SK-N-SH (cell line): ENCODE measurements at regions of chr19 and their contacts with region 1.

Region 1: GRCh38 chr19:4567584-4568071 is 8.1 kb upstream of the SEMA6B start:
- DNase-seq: peak; percentile 88
- H3K4me3 ChIP-seq: peak overlapping the region in 1 of 2 experiments; percentile 27; a peak in 1 of 4 replicates
- H3K27ac ChIP-seq: no peak overlapping the region
- H3K4me1 ChIP-seq: no peaks in the 10 kb centered on the region; a peak in 1 of 4 replicates
- H3K27me3 ChIP-seq: no peaks in the 10 kb centered on the region
- CTCF ChIP-seq: peak; percentile 88
- EP300 ChIP-seq: no peak
- RAD21 ChIP-seq: peak; percentile 51

Region 2: GRCh38 chr19:4583961-4584669 is 16.5 kb after region 1 on chr19:
- CTCF ChIA-PET with region 1: interaction called, 20 read pairs
- POLR2A ChIA-PET with region 1: no interaction called
- DNase-seq: peak; percentile 87
- H3K4me3 ChIP-seq: peak overlapping the region; percentile 50 to 60
- H3K27ac ChIP-seq: no peak overlapping the region
- H3K4me1 ChIP-seq: peaks cover 0 to 8% of the 10 kb centered on the region in 2 experiments; a peak in 1 of 4 replicates
- H3K27me3 ChIP-seq: peaks cover 22% of the 10 kb centered on the region; the same call in 1 of the 2 replicates
- CTCF ChIP-seq: no peak
- EP300 ChIP-seq: no peak
- RAD21 ChIP-seq: no peak

Region 3: DNA sequence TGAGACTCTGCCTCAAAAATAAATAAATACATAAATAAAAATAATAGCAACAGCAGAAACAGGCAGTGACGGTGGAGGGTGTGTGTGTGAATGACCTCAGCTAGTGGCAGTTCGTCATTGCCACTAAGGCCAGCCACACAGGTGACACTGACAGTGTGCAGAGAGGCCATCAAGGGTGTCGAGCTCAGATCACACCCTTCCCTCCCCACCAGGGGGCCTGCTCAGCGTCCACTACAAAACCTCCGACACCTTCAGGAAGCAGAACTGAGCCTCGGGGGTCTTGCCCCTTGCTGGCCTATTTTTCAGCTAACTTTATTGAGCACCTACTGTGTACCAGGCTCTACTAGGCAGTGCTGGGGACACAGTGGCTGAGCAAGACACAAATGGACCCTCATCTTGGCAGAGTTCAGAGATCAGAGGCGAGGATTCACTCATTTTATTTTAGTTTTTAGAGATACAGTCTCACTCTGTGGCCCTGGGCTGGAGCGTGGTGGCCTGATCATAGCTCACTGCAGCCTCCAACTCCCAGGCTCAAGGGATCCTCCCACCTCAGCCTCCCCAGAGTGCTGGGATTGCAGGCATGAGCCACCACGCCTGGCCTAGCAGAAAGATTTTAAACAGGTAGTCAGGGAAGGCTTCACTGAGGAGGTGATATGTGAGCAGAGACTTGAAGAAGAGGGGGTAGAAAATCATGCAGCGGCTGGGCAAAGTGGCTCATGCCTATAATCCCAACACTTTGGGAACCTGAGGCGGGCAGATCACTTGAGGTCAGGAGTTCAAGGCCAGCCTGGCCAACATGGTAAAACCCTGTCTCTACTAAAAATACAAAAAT is 22.2 kb after region 1 on chr19:
- CTCF ChIA-PET with region 1: interaction called, 20 read pairs
- POLR2A ChIA-PET with region 1: no interaction called
- DNase-seq: peak; percentile 74
- H3K4me3 ChIP-seq: no peak overlapping the region
- H3K27ac ChIP-seq: no peak overlapping the region
- H3K4me1 ChIP-seq: peaks cover 0 to 2% of the 10 kb centered on the region in 2 experiments; a peak in 1 of 4 replicates
- H3K27me3 ChIP-seq: peaks cover 23% of the 10 kb centered on the region; the same call in 1 of the 2 replicates
- CTCF ChIP-seq: peak; percentile 50
- EP300 ChIP-seq: no peak
- RAD21 ChIP-seq: peak; percentile 43

Region 4: GRCh38 chr19:4606921-4607678 is 39.5 kb after region 1 on chr19:
- CTCF ChIA-PET with region 1: interaction called, 20 read pairs
- POLR2A ChIA-PET with region 1: no interaction called
- DNase-seq: peak; percentile 89
- H3K4me3 ChIP-seq: no peak overlapping the region; a peak in 1 of 4 replicates
- H3K27ac ChIP-seq: no peak overlapping the region
- H3K4me1 ChIP-seq: peaks cover 0 to 2% of the 10 kb centered on the region in 2 experiments; a peak in 1 of 4 replicates
- H3K27me3 ChIP-seq: peaks cover 27% of the 10 kb centered on the region; the same call in 1 of the 2 replicates
- CTCF ChIP-seq: no peak
- EP300 ChIP-seq: peak in 1 of 2 experiments; percentile 48; a peak in 1 of 4 replicates
- RAD21 ChIP-seq: no peak

Region 5: DNA sequence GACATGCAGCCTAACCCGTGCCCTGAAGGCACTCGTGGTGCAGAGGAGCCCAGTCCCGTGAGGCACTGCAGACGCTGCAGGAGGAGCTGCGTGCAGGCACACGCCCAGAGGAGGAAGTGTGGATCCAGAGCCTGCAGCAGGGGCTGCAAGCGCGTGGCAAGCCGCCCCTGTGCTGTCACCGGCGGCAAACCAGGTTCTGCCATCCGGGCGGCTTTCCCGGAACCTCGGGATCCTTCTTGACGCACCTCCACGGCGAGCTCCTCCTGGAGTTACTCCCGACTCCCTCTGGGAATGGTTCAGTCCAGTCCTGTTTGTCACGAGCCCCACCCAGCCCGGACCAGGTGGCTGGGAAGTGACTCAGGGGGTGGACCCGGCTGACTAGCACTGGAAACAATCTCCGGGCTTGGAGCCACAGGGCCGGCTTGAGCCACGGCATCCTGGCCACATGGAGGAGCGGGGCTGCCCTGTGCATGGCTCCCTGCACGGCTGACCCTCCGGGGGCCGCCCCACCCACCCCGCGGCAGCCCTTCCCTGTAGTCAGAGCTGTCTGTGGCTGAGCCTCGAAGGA is 145.8 kb after region 1 on chr19:
- CTCF ChIA-PET with region 1: no interaction called
- POLR2A ChIA-PET with region 1: no interaction called
- DNase-seq: peak; percentile 43
- H3K4me3 ChIP-seq: no peak overlapping the region
- H3K27ac ChIP-seq: peak overlapping the region in 1 of 2 experiments; percentile 68; a peak in 2 of 4 replicates
- H3K4me1 ChIP-seq: peaks cover 0 to 24% of the 10 kb centered on the region in 2 experiments; a peak in 2 of 4 replicates
- H3K27me3 ChIP-seq: no peaks in the 10 kb centered on the region
- CTCF ChIP-seq: no peak
- EP300 ChIP-seq: peak in 1 of 2 experiments; percentile 72; a peak in 1 of 4 replicates
- RAD21 ChIP-seq: no peak